PC-9 (cell line): ENCODE measurements at regions of chr2 and their contacts with region 1.

Region 1: DNA sequence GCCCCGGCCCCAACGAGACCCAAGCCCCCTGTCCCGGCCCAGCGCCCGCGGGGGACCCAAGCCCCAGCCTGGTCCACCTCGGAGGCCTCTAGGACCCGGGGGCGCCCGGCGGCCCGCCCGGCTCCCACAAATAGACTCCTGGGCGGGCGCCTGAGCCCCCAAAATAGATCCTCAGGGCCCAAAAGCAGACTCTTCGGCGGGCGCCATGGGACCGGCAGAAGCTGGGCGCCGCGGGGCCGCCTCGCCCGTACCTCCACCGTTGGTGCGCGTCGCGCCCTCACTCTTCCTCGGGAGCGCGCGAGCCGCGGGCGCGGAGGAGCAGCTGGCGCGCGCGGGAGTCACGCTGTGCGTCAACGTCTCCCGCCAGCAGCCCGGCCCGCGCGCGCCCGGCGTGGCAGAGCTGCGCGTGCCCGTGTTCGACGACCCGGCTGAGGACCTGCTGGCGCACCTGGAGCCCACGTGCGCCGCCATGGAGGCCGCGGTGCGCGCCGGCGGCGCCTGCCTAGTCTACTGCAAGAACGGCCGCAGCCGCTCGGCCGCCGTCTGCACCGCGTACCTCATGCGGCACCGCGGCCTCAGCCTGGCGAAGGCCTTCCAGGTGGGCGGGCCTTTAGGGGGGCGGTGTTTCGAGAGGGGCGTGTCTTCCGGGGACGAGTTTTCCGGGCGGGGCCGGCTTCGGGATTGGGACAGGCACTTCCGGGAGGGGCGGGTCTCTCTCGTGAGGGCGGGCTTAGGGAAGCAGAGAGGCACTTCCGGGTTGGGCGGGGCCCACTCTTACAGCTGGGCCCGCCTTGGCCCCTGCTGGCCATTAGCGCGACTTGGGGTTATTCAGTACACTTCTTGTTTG is 546 bp downstream of the DUSP28 start:
- DNase-seq: peak; percentile 94 to 100
- H3K4me3 ChIP-seq: peak overlapping the region; percentile 75
- H3K27ac ChIP-seq: peak overlapping the region; percentile 95
- H3K4me1 ChIP-seq: peaks cover 55% of the 10 kb centered on the region
- H3K27me3 ChIP-seq: no peaks in the 10 kb centered on the region
- CTCF ChIP-seq: no peak

Region 2: GRCh38 chr2:240149943-240150784 is 410.5 kb before region 1 on chr2:
- CTCF ChIA-PET with region 1: no interaction called
- POLR2A ChIA-PET with region 1: no interaction called
- intact Hi-C with region 1: loop called (anchors 10 kb)
- DNase-seq: peak in 1 of 2 experiments; percentile 72
- H3K4me3 ChIP-seq: no peak overlapping the region
- H3K27ac ChIP-seq: no peak overlapping the region
- H3K4me1 ChIP-seq: no peaks in the 10 kb centered on the region
- H3K27me3 ChIP-seq: peaks cover 48% of the 10 kb centered on the region
- CTCF ChIP-seq: peak; percentile 95

Region 3: GRCh38 chr2:240355001-240355976 is 205.4 kb before region 1 on chr2:
- CTCF ChIA-PET with region 1: no interaction called
- POLR2A ChIA-PET with region 1: no interaction called
- intact Hi-C with region 1: no loop called
- DNase-seq: no peak
- H3K4me3 ChIP-seq: no peak overlapping the region
- H3K27ac ChIP-seq: no peak overlapping the region
- H3K4me1 ChIP-seq: no peaks in the 10 kb centered on the region
- H3K27me3 ChIP-seq: peaks cover 20% of the 10 kb centered on the region; the same call in 1 of the 2 replicates
- CTCF ChIP-seq: no peak

Region 4: DNA sequence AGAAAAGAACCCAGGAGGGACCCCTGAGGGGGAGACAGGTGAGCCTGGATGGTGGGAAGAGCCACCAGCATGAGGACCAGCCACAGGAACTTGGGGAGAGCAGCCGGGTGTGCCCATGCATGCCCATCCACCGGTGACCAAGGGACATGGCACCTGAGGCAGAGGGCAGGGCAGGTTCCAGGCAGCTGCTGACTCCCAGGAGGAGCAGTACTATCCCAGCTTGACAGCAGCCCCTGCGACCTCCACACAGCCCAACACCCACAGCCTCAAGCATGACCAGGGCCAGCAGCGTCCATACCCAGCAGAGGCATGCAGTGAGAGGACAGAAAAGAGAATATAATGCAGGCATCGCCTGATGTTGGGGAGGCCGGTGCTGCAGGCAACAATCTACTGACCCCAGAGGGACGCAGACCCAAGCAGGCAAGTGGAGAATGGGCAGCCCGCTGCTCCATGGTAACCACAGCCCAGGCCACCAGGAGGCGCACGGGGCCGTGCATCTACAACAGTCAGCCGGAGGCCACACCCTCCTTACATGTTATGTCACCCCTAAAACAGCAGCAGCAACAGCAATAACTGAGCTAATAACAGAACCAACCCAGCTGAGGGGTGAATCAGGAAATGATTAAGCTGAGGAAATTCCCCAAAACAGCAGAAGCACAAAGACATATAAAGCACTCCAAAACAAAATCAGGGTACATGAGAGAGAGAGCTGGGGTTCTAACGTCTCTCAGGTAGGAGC is 47.0 kb before region 1 on chr2:
- CTCF ChIA-PET with region 1: interaction called, 15 read pairs
- POLR2A ChIA-PET with region 1: interaction called, 4 read pairs
- intact Hi-C with region 1: loop called (anchors 5 kb)
- DNase-seq: peak; percentile 71 to 87
- H3K4me3 ChIP-seq: no peak overlapping the region
- H3K27ac ChIP-seq: no peak overlapping the region
- H3K4me1 ChIP-seq: no peaks in the 10 kb centered on the region
- H3K27me3 ChIP-seq: no peaks in the 10 kb centered on the region
- CTCF ChIP-seq: peak; percentile 93

Region 5: DNA sequence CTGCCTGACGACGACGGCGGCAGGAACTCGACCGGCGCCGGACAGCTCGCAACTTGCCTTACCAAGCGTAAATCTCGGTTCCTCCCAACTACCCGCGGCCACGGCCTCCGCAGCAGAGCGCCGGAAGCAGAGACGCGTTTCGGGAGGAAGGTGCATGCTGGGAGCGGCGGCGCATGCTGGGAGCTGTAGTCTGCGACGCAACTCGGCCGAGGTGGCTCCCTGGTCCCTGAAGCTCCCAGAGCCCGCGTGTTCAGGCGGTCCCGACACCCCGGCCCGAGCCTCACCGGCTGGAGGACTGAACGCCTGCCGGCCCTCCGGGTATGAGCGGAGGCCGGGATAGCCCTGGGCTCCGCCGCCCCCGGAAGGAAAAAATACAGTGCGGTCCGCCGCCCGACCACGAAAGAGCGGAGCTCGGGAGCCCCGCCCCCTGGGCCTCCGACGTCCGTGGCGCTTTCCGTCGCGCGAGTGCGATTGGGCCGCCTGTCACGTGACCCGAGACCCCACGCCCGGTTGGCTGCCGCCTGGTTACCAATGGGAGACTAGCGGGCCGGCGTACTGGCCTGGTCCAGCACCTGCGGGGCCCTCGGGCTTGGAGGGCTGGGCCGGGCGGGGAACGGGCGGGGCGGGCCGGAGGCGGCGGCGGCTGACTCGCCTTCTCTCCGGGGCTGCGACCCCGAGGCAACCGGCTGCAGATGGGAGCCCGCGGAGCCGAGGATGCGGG is 25.7 kb after region 1 on chr2 and contains the start of gene CAPN10:
- CTCF ChIA-PET with region 1: interaction called, 22 read pairs
- POLR2A ChIA-PET with region 1: interaction called, 48 read pairs
- intact Hi-C with region 1: loop called (anchors 1 kb)
- DNase-seq: peak; percentile 93 to 100
- H3K4me3 ChIP-seq: peak within 1 kb of the TSS; percentile 83
- H3K27ac ChIP-seq: peak within 1 kb of the TSS; percentile 61
- H3K4me1 ChIP-seq: peaks cover 40% of the 10 kb centered on the region
- H3K27me3 ChIP-seq: no peaks in the 10 kb centered on the region
- CTCF ChIP-seq: no peak
- total RNA-seq, gene CAPN10: 49.8 and 70.3 TPM in 2 replicates